ENCODE measurements at regions of chr12 and their contacts with region 1.

Region 1: DNA sequence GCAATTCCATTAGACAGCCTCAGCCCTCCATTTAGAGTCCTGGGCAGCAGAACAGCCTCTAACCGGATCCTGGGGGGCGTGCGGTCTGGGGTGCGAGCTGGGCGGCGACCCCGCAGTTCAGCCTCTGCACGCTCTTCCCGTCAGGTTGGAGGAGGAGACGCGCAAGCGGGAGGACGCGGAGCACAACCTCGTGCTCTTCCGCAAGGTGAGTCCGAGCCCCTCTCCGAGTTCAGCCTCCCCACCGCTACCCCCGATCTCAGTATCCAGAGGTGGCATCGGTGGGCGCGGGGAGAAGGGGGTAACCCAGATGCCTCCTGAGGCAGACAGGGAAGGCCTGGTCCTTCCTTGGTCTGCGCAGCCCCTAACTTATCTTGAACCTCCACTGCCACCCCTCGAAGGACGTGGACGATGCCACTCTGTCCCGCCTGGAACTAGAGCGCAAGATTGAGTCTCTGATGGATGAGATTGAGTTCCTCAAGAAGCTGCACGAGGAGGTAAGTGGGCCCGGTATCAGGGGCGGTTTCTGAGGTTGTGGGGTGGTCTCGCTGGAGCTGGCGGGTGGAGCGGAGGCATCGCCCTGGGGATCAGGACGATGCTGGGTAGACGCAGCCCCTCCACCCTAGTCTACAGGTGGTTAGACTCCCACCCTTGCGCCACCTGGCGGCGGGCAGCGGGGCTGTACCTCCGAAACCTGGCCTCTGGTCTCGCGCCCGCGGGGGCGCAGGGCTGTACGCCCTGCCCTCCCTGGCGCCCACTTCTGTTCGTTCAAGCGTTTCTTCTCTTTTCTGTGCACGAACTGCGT is 1.3 kb downstream of the PRPH start:
- DNase-seq: peak; percentile 74 to 88
- H3K4me3 ChIP-seq: peak overlapping the region; percentile 69
- H3K4me3 Mint-ChIP-seq: peak overlapping the region; percentile 79
- H3K27ac Mint-ChIP-seq: no peak overlapping the region
- H3K4me1 ChIP-seq: 0 out of 2 replicates have a peak, but pooled peaks cover 5% of the 10 kb centered on the region
- H3K4me1 Mint-ChIP-seq: peaks cover 14% of the 10 kb centered on the region
- H3K27me3 ChIP-seq: no peaks in the 10 kb centered on the region
- H3K27me3 Mint-ChIP-seq: no peaks in the 10 kb centered on the region
- CTCF ChIP-seq: peak; percentile 84 to 94

Region 2: DNA sequence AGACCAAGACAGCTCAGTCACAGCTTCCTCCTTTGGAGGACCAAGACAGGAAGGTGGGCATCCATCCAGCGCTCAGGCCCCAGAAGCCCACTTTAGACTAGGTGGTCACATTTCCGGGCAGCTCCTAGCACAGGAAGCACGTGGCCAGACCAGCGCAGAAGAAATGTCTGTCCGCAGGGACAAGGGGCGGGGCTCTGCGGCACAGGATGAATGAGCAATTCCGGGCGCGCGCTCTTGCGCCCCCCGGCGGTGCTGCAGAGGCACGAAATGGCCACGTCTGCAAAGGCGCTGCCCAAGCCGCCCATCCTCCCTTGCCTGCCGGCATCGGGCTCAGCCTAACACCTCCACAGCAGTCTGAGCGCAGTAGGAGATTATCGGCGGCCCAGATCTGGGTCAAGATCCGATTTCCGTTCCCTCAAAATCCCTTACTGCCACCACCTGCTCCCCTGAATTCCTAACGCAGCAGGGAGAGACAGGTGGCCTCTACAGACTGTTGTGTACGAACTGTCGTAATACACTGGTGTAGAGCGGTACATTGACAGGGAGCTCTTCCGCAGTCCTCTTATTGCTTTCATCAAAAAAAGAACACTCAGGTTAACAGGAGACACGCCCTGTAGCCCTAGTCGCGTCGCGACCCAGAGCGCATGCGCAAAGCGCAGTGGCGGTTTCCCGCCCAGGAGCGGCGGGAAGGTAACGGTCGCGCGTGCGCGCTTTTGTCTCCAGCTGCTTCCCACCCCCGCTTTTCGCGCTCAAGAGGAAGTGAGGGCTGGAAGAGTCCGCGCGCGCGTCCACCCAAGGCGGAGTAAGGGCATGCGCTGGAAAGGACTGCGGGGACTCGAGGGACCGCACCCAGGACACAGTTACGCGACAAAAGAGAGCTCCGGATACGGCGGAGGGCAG is 165.8 kb before region 1 on chr12:
- CTCF ChIA-PET with region 1: no interaction called
- POLR2A ChIA-PET with region 1: no interaction called
- intact Hi-C with region 1: no loop called
- DNase-seq: peak; percentile 94 to 96
- H3K4me3 ChIP-seq: peak overlapping the region; percentile 88
- H3K4me3 Mint-ChIP-seq: peak overlapping the region; percentile 74
- H3K27ac Mint-ChIP-seq: peak overlapping the region; percentile 99
- H3K4me1 ChIP-seq: peaks cover 8% of the 10 kb centered on the region
- H3K4me1 Mint-ChIP-seq: peaks cover 10% of the 10 kb centered on the region
- H3K27me3 ChIP-seq: no peaks in the 10 kb centered on the region
- H3K27me3 Mint-ChIP-seq: no peaks in the 10 kb centered on the region
- CTCF ChIP-seq: peak; percentile 92 to 95

Region 3: DNA sequence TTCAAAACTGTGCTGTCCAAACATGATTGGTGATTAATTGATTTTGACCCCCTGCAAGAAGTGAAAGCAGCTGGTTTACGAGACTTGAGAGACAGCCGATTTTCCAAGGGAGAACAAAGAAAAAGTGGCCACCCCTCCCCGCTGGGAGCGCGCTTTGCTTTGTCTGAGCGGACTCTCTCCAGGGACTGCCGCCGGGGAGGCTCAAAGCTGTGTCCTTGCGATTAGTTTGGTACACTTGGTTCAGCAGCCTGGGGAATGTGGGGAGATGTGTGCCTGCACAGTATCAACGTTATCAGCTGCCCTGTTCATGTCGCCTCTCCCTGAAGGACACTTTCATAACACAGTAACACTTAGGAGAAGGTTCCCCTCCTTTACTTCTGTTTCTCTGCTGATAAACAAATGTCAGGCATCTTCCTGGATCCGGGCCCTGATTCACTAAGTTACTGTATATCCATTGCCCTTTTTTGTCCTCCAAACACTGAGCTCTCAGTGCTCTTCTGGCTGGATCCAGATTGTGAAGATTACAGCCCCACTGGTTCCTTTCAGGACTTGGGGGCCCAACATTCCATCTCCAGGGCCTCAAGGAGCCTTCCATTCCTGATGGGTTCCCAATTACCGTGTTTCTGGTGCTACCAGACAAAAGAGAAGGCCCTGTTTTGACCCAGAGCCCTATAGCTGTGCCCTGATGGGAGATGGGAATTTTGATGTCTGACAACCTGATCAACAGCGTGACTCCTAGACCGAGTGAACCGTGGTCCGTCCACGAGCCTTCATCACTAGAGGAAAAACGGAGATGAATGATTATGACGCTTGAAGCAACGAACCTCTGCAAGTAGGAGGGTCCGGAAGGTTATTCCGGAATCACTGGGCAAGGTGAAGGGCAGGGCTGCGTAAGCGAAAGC is 63.0 kb before region 1 on chr12:
- CTCF ChIA-PET with region 1: interaction called, 11 read pairs
- POLR2A ChIA-PET with region 1: no interaction called
- intact Hi-C with region 1: no loop called
- DNase-seq: no peak
- H3K4me3 ChIP-seq: no peak overlapping the region
- H3K4me3 Mint-ChIP-seq: peak overlapping the region; percentile 82
- H3K27ac Mint-ChIP-seq: peak overlapping the region; percentile 47
- H3K4me1 ChIP-seq: no peaks in the 10 kb centered on the region; the same call in 1 of the 2 replicates
- H3K4me1 Mint-ChIP-seq: peaks cover 13% of the 10 kb centered on the region
- H3K27me3 ChIP-seq: no peaks in the 10 kb centered on the region
- H3K27me3 Mint-ChIP-seq: peaks cover 2% of the 10 kb centered on the region
- CTCF ChIP-seq: no peak

Region 4: DNA sequence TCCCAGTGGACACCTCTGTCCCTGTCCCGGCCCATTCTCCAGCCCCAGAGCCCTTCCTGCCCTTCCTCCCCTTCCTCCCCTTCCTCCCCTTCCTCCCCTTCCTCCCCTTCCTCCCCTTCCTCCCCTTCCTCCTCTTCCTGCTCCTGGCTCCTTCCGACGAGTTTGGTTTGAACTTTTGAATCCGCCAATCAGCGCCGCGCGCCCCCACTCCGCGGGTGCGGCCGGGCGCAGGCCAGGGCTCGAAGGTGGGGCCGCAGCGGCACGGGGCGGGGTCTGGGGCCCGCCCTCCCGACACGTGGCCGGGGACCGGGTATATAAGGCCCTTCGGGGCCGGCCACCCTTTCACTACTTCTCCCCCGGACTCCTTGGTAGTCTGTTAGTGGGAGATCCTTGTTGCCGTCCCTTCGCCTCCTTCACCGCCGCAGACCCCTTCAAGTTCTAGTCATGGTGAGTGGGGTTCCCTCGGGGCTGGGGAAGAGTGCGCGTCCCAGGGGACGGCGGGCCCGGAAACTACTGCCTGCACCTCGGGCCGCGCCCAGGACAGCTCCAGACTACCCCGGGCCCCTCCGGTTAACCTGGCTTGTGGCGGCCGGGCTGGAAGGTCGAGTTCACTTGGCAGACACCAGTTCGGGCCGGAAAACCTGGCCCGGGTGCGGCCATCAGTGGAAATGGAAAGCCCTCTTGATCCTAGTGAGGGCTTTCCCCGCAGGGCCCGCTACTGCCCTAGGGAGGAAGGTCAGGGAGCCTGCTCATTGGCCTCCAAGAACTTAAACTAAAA is 31.3 kb before region 1 on chr12 and contains the start of gene TUBA1C:
- CTCF ChIA-PET with region 1: interaction called, 10 read pairs
- POLR2A ChIA-PET with region 1: interaction called, 4 read pairs
- intact Hi-C with region 1: loop called (anchors 1 kb)
- DNase-seq: peak; percentile 97 to 99
- H3K4me3 ChIP-seq: peak within 1 kb of the TSS; percentile 79
- H3K4me3 Mint-ChIP-seq: peak within 1 kb of the TSS; percentile 86
- H3K27ac Mint-ChIP-seq: peak within 1 kb of the TSS; percentile 89
- H3K4me1 ChIP-seq: peaks cover 30% of the 10 kb centered on the region
- H3K4me1 Mint-ChIP-seq: peaks cover 22% of the 10 kb centered on the region
- H3K27me3 ChIP-seq: no peaks in the 10 kb centered on the region
- H3K27me3 Mint-ChIP-seq: no peaks in the 10 kb centered on the region
- CTCF ChIP-seq: no peak
- total RNA-seq, gene TUBA1C: 636 and 638 TPM in 2 replicates

Region 5: GRCh38 chr12:49282302-49282701 is 13.9 kb before region 1 on chr12:
- CTCF ChIA-PET with region 1: interaction called, 12 read pairs
- POLR2A ChIA-PET with region 1: no interaction called
- intact Hi-C with region 1: no loop called
- DNase-seq: no peak
- H3K4me3 ChIP-seq: no peak overlapping the region
- H3K4me3 Mint-ChIP-seq: no peak overlapping the region
- H3K27ac Mint-ChIP-seq: no peak overlapping the region
- H3K4me1 ChIP-seq: peaks cover 15% of the 10 kb centered on the region
- H3K4me1 Mint-ChIP-seq: peaks cover 13% of the 10 kb centered on the region
- H3K27me3 ChIP-seq: no peaks in the 10 kb centered on the region
- H3K27me3 Mint-ChIP-seq: no peaks in the 10 kb centered on the region
- CTCF ChIP-seq: no peak

Region 6: DNA sequence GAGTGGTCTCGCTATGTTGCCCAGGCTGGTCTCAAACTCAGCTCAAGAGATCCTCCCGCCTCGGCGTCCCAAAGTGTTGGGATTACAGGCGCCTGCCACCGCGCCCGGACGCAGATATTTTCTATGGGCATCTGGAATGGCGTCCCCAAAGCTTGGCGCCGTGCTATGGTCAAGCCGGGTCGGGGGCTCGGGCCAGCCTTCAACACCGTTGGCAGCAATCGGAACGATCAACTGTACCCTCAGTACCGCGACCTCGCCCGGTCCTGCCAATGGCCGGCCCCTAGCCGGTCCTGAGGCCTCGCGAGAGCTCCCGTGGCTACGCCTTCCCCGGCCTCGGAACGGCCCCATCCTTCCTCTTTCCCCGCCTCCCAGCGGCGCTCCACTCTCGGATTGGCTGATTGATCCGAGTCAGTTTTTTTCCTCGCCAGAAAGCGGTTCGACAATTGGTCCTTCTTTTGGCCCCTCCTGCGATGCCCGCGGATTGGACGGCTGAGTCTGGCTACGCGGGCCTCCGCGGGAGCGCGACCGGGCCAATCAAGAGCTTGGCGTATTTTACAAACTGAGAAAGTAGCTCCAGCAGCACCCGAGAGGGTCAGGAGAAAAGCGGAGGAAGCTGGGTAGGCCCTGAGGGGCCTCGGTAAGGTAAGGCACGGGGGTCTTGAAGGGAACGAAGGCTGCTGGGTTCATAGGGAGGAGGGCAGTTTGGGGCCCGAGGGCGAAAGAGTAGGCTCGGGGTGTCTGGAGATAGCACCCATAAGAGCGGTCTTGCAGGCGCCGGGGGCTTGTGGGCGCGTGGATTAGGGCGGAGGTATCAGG is 26.7 kb after region 1 on chr12 and contains the start of gene TROAP:
- CTCF ChIA-PET with region 1: interaction called, 48 read pairs
- POLR2A ChIA-PET with region 1: interaction called, 20 read pairs
- intact Hi-C with region 1: loop called (anchors 2 kb)
- DNase-seq: peak; percentile 99 to 100
- H3K4me3 ChIP-seq: peak within 1 kb of the TSS; percentile 89
- H3K4me3 Mint-ChIP-seq: peak within 1 kb of the TSS; percentile 99
- H3K27ac Mint-ChIP-seq: peak within 1 kb of the TSS; percentile 98
- H3K4me1 ChIP-seq: peaks cover 10% of the 10 kb centered on the region; the same call in 1 of the 2 replicates
- H3K4me1 Mint-ChIP-seq: peaks cover 6% of the 10 kb centered on the region
- H3K27me3 ChIP-seq: no peaks in the 10 kb centered on the region
- H3K27me3 Mint-ChIP-seq: no peaks in the 10 kb centered on the region
- CTCF ChIP-seq: no peak
- total RNA-seq, gene TROAP: 134 and 135 TPM in 2 replicates

Region 7: GRCh38 chr12:49331380-49332222 is 35.4 kb after region 1 on chr12:
- CTCF ChIA-PET with region 1: interaction called, 44 read pairs
- POLR2A ChIA-PET with region 1: interaction called, 3 read pairs
- intact Hi-C with region 1: no loop called
- DNase-seq: peak; percentile 84 to 86
- H3K4me3 ChIP-seq: no peak overlapping the region
- H3K4me3 Mint-ChIP-seq: peak overlapping the region; percentile 18
- H3K27ac Mint-ChIP-seq: peak overlapping the region; percentile 77
- H3K4me1 ChIP-seq: peaks cover 24% of the 10 kb centered on the region
- H3K4me1 Mint-ChIP-seq: peaks cover 24% of the 10 kb centered on the region
- H3K27me3 ChIP-seq: no peaks in the 10 kb centered on the region
- H3K27me3 Mint-ChIP-seq: no peaks in the 10 kb centered on the region
- CTCF ChIP-seq: peak; percentile 90 to 96

Region 8: GRCh38 chr12:49342066-49342913 is 46.1 kb after region 1 on chr12:
- CTCF ChIA-PET with region 1: interaction called, 40 read pairs
- POLR2A ChIA-PET with region 1: no interaction called
- intact Hi-C with region 1: loop called (anchors 2 kb)
- DNase-seq: peak; percentile 61 to 74
- H3K4me3 ChIP-seq: no peak overlapping the region
- H3K4me3 Mint-ChIP-seq: no peak overlapping the region
- H3K27ac Mint-ChIP-seq: no peak overlapping the region
- H3K4me1 ChIP-seq: peaks cover 4% of the 10 kb centered on the region
- H3K4me1 Mint-ChIP-seq: peaks cover 8% of the 10 kb centered on the region
- H3K27me3 ChIP-seq: no peaks in the 10 kb centered on the region
- H3K27me3 Mint-ChIP-seq: no peaks in the 10 kb centered on the region
- CTCF ChIP-seq: peak; percentile 47 to 67

Measured in Caco-2 (cell line).